ENCODE measurements at regions of chr17 and their contacts with region 1.

Region 1: GRCh38 chr17:18860161-18860972 is 2.4 kb downstream of the PRPSAP2 start:
- DNase-seq: no peak
- ATAC-seq: no peak
- H3K4me3 ChIP-seq: no peak overlapping the region
- H3K27ac ChIP-seq: no peak overlapping the region
- H3K4me1 ChIP-seq: peaks cover 28% of the 10 kb centered on the region
- H3K27me3 ChIP-seq: no peaks in the 10 kb centered on the region
- CTCF ChIP-seq: no peak
- POLR2A ChIP-seq: no peak

Region 2: GRCh38 chr17:18772471-18772870 is 87.9 kb before region 1 on chr17:
- intact Hi-C with region 1: no loop called
- DNase-seq: no peak
- ATAC-seq: no peak
- H3K4me3 ChIP-seq: no peak overlapping the region
- H3K27ac ChIP-seq: no peak overlapping the region
- H3K4me1 ChIP-seq: no peaks in the 10 kb centered on the region
- H3K27me3 ChIP-seq: no peaks in the 10 kb centered on the region
- CTCF ChIP-seq: no peak
- POLR2A ChIP-seq: no peak

Region 3: GRCh38 chr17:18916816-18917500 is 56.6 kb after region 1 on chr17:
- intact Hi-C with region 1: loop called (anchors 10 kb)
- DNase-seq: no peak
- ATAC-seq: no peak
- H3K4me3 ChIP-seq: no peak overlapping the region
- H3K27ac ChIP-seq: no peak overlapping the region
- H3K4me1 ChIP-seq: peaks cover 17% of the 10 kb centered on the region
- H3K27me3 ChIP-seq: no peaks in the 10 kb centered on the region
- CTCF ChIP-seq: no peak
- POLR2A ChIP-seq: no peak

Region 4: GRCh38 chr17:18933102-18934058 is 73.0 kb after region 1 on chr17:
- intact Hi-C with region 1: no loop called
- DNase-seq: no peak
- ATAC-seq: no peak
- H3K4me3 ChIP-seq: no peak overlapping the region
- H3K27ac ChIP-seq: no peak overlapping the region
- H3K4me1 ChIP-seq: no peaks in the 10 kb centered on the region
- H3K27me3 ChIP-seq: no peaks in the 10 kb centered on the region
- CTCF ChIP-seq: no peak
- POLR2A ChIP-seq: no peak

Measured in body of pancreas (tissue), 4 donors.